ENCODE measurements at regions of chr4 and their contacts with region 1.

Region 1: GRCh38 chr4:101730291-101731117 is 60.0 kb upstream of the BANK1 start:
- DNase-seq: peak; percentile 62
- ATAC-seq: peak; percentile 83 to 89

Region 2: GRCh38 chr4:101169044-101170014 is 561.2 kb before region 1 on chr4:
- intact Hi-C with region 1: loop called (anchors 1 to 10 kb)
- DNase-seq: peak; percentile 47
- ATAC-seq: peak; percentile 93 to 97